Body of pancreas (tissue), 4 donors: ENCODE measurements at regions of chr20 and their contacts with region 1.

Region 1: DNA sequence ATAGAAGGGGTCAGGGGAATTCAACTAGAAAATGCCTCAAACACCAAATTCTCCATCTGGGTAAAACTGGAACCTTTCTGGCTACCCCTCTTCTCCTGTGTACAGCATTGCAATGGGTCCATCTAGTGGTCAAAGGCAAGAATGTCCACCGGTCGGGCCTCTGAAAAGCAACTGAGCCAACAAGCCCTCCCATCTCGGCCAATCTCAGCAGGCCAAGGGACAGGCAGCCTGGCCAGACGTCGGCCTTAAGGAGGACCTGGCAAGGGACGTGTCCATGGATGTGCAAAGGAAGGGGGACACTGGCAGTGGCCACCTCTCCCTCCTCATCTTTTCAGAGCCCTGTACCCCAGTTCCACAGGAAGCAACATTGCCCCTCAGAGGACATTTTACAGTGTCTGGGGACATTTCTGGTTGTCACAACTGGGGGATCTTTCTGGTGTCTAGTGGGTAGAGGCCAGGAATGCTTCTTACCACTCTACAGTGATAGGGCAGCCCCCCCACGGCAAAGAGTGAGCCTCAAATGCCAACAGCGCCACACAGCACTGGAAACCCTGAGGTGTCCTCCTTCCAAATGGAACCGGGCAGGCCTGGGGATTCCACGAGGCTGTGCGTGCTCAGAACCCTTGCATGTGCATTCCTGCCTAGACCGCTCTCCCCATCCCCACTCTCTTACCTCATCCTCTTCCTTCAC is 99.8 kb upstream of the FOXA2 start:
- DNase-seq: peak; percentile 74 to 82 (median 78)
- ATAC-seq: peak; percentile 83
- H3K4me3 ChIP-seq: no peak overlapping the region
- H3K27ac ChIP-seq: no peak overlapping the region
- H3K4me1 ChIP-seq: peaks cover 16% of the 10 kb centered on the region
- H3K27me3 ChIP-seq: no peaks in the 10 kb centered on the region
- CTCF ChIP-seq: peak; percentile 61 to 93 (median 91)
- POLR2A ChIP-seq: no peak

Region 2: GRCh38 chr20:22333885-22334545 is 350.2 kb before region 1 on chr20:
- intact Hi-C with region 1: loop called (anchors 5 kb)
- DNase-seq: peak; percentile 61 to 74 (median 68)
- ATAC-seq: peak; percentile 86
- H3K4me3 ChIP-seq: no peak overlapping the region
- H3K27ac ChIP-seq: no peak overlapping the region
- H3K4me1 ChIP-seq: no peaks in the 10 kb centered on the region
- H3K27me3 ChIP-seq: no peaks in the 10 kb centered on the region
- CTCF ChIP-seq: peak; percentile 52 to 78 (median 71)
- POLR2A ChIP-seq: no peak

Region 3: DNA sequence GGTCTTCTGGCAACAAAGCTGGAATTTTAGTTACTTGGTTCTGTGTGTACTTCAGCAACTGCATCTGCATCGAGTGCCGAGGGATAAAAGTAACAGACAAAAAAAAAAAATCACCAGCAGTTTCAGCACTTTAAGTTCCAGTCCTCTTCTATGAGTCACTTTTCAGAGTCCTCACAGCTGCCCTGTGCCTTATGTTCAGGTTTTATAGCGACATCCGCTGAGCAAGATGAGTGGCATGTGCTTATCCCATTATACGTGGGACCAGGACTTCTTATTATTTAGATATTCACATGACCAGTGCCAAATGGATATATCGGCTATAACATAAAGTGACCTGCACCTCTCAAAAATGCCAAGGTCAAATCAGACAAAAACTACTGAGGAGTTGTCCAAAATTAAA is 342.7 kb before region 1 on chr20:
- intact Hi-C with region 1: loop called (anchors 5 kb)
- DNase-seq: no peak
- ATAC-seq: no peak
- H3K4me3 ChIP-seq: no peak overlapping the region
- H3K27ac ChIP-seq: no peak overlapping the region
- H3K4me1 ChIP-seq: no peaks in the 10 kb centered on the region
- H3K27me3 ChIP-seq: no peaks in the 10 kb centered on the region
- CTCF ChIP-seq: no peak
- POLR2A ChIP-seq: no peak

Region 4: DNA sequence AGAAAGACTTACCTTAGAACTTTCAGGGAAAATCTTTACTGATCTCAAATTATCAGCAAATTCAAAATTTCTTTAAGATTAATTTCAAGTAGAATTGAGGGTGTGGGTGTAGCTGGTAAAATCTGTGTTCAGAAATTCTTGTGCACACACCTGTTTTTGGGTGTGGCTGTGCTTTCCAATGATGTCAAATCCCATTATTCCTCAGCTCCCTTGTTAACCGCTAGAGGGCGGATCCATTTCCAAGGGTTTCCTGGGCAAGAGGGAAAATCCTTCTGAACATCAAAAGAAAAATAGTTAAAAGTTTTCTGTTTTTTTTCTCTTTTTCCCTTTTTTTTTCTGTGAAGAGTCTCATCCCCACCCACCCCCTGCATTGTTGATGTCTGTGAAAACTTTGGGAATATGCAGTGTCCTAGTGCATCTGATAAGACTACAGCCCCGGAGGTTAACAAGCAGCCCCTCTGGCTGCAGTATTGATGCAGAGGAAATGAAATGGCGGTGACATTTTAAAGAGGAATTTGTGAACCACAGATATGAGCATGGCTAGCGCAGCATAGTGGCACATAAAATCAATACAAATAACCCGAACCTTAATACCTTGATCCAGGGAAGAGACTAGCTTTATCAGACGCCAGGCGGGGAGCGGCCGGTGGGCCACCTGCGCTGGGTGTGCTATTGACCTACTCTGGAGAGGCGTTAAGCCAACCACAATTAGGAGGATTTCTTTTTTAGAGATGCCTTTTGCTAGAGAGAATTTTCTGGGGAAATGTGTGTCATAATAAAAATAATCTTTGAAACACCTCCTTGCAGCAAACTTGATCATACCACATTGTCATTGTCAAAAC is 230.8 kb before region 1 on chr20:
- intact Hi-C with region 1: loop called (anchors 10 kb)
- DNase-seq: peak; percentile 46 to 55 (median 54)
- ATAC-seq: peak; percentile 83
- H3K4me3 ChIP-seq: no peak overlapping the region
- H3K27ac ChIP-seq: no peak overlapping the region
- H3K4me1 ChIP-seq: peaks cover 13% of the 10 kb centered on the region
- H3K27me3 ChIP-seq: no peaks in the 10 kb centered on the region
- CTCF ChIP-seq: peak; percentile 48 to 82 (median 76)
- POLR2A ChIP-seq: no peak

Region 5: DNA sequence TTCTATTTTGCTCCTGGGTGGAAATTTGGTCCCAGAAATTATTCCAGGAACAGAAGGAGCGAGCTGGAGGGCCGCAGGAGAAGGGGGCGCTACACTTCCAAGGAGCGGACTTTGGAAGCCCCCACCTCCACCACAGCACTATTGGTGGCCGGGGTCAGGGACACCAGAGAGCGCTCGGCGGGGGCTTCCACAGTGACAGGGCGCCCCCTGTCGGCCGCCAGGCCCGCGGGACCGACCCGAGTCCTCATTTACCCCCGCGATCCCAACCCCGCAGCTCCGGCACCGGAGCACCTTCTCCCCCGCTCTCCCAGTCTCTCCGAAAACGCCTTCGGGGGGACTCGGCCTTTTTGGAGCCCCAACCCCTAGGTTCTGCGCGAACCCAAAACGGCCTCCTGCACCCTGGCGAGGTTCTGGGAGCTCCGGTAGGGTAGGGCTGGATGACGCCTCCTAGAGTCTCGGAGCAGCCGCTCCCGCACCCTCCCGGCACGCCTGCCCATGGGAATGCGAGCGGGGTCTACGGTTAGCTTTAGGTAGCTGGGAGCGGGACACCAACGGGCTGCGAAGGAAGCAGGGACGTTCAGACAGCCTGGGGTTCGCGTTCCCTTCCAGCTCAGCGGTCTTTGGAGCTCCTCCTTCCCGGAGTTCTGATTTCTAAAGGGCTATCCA is 97.4 kb before region 1 on chr20:
- intact Hi-C with region 1: loop called (anchors 5 kb)
- DNase-seq: peak; percentile 73 to 89 (median 81)
- ATAC-seq: no peak
- H3K4me3 ChIP-seq: no peak overlapping the region
- H3K27ac ChIP-seq: no peak overlapping the region
- H3K4me1 ChIP-seq: peaks cover 21% of the 10 kb centered on the region
- H3K27me3 ChIP-seq: no peaks in the 10 kb centered on the region
- CTCF ChIP-seq: peak; percentile 84 to 94 (median 86)
- POLR2A ChIP-seq: no peak